Naive thymus-derived CD8-positive, alpha-beta T cell (primary cell): ENCODE measurements at regions of chr11 and their contacts with region 1.

Region 1: DNA sequence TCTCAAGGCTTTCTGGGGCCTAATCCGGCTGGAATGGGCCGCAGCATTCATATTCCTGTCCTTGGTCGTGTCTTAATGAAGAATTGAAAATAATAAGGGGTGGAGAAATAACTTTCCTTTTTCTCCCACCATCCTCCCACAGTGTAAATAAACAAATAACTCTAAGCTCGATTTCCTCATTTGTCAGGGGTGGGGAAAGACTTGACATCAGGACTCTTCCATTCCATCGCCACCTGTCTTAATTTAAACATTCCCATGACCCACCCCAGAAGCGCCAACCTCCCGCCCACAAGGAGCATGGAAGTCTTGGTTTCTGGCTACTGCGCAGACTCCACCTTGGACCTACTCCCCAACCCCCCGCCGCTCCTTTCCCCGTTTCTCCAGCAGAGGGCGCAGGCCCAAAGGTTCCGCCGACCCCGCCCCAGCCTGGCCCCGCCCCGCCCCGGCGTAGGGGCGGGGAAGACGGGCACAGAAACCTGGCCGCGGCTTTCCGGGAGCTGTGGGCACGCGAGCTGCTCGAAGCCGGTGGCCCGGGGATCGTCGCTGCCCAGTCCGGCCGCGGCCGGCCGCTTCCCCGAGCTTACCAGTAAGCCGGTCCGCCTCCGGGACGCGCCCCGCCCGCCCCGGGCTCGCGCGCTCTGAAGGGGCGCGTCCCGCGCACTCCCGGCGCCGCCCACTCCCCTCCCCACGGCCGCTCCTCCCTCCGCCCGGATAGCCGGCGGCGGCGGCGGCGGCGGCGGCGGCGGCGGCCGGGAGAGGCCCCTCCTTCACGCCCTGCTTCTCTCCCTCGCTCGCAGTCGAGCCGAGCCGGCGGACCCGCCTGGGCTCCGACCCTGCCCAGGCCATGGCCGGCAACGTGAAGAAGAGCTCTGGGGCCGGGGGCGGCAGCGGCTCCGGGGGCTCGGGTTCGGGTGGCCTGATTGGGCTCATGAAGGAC is at the start of gene CBL:
- DNase-seq: peak; percentile 85 to 98 (median 95)
- ATAC-seq: peak; percentile 86 to 87
- H3K4me3 Mint-ChIP-seq: peak within 1 kb of the TSS; percentile 95 to 100 (median 98)
- H3K27ac Mint-ChIP-seq: peak within 1 kb of the TSS; percentile 90 to 98 (median 95)
- H3K4me1 Mint-ChIP-seq: peaks cover 14 to 52% (median 34%) of the 10 kb centered on the region in 4 donors
- H3K27me3 Mint-ChIP-seq: no peaks in the 10 kb centered on the region
- polyA plus RNA-seq, gene CBL: 11.5 to 16.1 (median 12.2) TPM

Region 2: GRCh38 chr11:119190531-119190930 is 15.3 kb before region 1 on chr11:
- POLR2A ChIA-PET with region 1: no interaction called
- DNase-seq: no peak
- ATAC-seq: no peak
- H3K4me3 Mint-ChIP-seq: no peak overlapping the region
- H3K27ac Mint-ChIP-seq: peak overlapping the region in 1 of 10 donors; percentile 53
- H3K4me1 Mint-ChIP-seq: peaks cover 0 to 1% (median 0%) of the 10 kb centered on the region in 4 donors
- H3K27me3 Mint-ChIP-seq: peaks cover 0 to 4% (median 0%) of the 10 kb centered on the region in 5 donors

Region 3: DNA sequence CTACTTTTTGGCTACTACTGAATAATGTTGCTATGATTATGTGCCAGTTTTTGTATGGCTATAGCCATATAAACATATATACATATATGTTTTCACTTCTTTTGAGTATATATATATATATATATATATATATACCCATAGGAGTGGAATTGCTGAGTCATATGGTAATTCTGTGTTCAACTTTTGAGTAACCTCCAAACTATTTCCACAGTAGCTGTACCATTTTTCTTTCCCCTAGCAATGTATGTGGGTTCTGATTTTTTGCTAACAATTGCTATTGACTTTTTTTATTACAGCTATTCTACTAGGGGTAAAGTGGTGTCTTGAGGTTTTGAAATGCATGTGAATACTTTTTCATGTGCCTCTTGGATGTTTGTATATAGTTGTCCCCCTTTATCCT is 30.6 kb after region 1 on chr11:
- POLR2A ChIA-PET with region 1: interaction called, 12 read pairs
- DNase-seq: no peak
- ATAC-seq: no peak
- H3K4me3 Mint-ChIP-seq: no peak overlapping the region
- H3K27ac Mint-ChIP-seq: peak overlapping the region in 3 of 10 donors; percentile 38 to 63 (median 53)
- H3K4me1 Mint-ChIP-seq: peaks cover 25 to 51% (median 40%) of the 10 kb centered on the region in 4 donors
- H3K27me3 Mint-ChIP-seq: no peaks in the 10 kb centered on the region

Region 4: DNA sequence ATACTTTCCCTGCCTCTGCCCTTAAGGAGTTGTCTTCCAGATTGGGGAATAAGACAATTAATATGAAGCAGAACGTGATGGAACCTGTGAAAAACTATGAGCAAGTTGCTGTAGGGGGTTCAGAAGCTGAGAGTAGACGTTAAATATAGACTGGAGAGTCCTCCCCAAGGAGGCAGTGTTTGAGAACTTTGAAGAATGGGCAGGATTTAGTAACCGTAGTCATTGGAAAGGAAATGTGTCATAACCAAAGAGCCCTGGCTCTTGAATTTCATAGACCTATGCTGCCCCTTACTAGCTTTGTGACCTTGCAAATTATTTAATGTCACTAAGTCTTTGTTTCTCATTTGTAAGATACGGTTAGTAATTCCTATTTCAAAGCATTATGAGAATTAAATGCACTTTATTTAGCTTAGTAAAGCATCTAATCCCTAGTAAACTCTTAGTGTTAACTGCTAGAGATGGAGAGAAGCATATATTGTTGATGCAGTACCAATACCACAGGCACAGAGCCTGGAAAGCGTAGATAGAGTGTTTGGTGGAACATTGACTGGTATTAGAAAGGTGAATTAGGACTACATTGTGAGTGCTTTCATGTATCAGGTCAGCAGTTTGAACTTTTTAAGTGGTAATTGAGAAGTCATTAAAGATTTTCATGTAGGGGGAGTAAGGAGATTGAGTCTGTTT is 57.0 kb after region 1 on chr11:
- POLR2A ChIA-PET with region 1: interaction called, 19 read pairs
- DNase-seq: no peak
- ATAC-seq: no peak
- H3K4me3 Mint-ChIP-seq: no peak overlapping the region
- H3K27ac Mint-ChIP-seq: no peak overlapping the region
- H3K4me1 Mint-ChIP-seq: peaks cover 17 to 56% (median 32%) of the 10 kb centered on the region in 4 donors
- H3K27me3 Mint-ChIP-seq: no peaks in the 10 kb centered on the region

Region 5: GRCh38 chr11:119277660-119278059 is 71.8 kb after region 1 on chr11:
- POLR2A ChIA-PET with region 1: interaction called, 56 read pairs
- DNase-seq: no peak
- ATAC-seq: no peak
- H3K4me3 Mint-ChIP-seq: no peak overlapping the region
- H3K27ac Mint-ChIP-seq: no peak overlapping the region
- H3K4me1 Mint-ChIP-seq: peaks cover 8 to 22% (median 15%) of the 10 kb centered on the region in 4 donors
- H3K27me3 Mint-ChIP-seq: no peaks in the 10 kb centered on the region

Region 6: DNA sequence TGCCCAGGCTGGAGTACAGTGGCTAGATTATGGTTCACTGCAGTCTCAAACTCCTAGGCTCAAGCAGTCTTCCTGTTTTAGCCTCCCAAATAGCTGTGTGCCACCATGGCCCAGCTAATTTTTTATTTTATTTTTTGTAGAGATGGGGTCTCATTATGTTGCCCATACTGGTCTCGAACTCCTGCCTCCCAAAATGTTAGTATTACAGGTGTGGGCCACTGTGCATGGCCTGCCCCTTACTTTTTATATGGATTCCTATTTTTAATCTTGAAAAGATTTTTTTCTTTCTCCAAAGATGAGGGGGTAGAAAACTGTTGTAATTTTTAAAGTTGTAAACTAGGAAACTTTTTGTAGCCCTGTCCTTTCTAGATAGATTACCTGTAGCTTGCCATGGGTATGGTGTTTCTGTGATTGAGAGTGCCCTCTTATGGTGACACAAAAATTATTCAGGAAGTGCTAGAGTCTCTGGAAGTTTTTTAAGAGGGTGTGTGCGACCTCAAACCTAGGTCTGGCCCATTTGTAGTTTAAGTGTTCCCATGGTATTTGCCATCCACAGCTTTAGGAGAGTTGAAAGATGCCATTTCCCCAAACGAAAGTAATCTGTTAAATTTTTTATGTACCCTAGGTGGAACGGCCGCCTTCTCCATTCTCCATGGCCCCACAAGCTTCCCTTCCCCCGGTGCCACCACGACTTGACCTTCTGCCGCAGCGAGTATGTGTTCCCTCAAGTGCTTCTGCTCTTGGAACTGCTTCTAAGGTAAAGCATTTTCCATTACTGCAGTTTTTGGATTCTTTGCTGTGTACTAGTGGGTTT is 78.7 kb after region 1 on chr11:
- POLR2A ChIA-PET with region 1: interaction called, 56 read pairs
- DNase-seq: peak in 7 of 10 donors; percentile 4 to 72 (median 41)
- ATAC-seq: peak; percentile 95 to 98
- H3K4me3 Mint-ChIP-seq: peak overlapping the region in 3 of 10 donors; percentile 1 to 22 (median 9)
- H3K27ac Mint-ChIP-seq: peak overlapping the region in 9 of 10 donors; percentile 33 to 86 (median 74)
- H3K4me1 Mint-ChIP-seq: peaks cover 23 to 36% (median 29%) of the 10 kb centered on the region in 4 donors
- H3K27me3 Mint-ChIP-seq: no peaks in the 10 kb centered on the region

Region 7: GRCh38 chr11:119323538-119324033 is 117.7 kb after region 1 on chr11:
- POLR2A ChIA-PET with region 1: interaction called, 15 read pairs
- DNase-seq: peak; percentile 62 to 89 (median 78)
- ATAC-seq: peak; percentile 12 to 21
- H3K4me3 Mint-ChIP-seq: peak overlapping the region in 6 of 10 donors; percentile 2 to 71 (median 38)
- H3K27ac Mint-ChIP-seq: peak overlapping the region in 2 of 10 donors; percentile 0 to 43
- H3K4me1 Mint-ChIP-seq: peaks cover 17 to 33% (median 24%) of the 10 kb centered on the region in 4 donors
- H3K27me3 Mint-ChIP-seq: peaks cover 1 to 8% (median 8%) of the 10 kb centered on the region in 5 donors